Posterior cingulate gyrus (tissue), 11 donors: ENCODE measurements at regions of chr20 and their contacts with region 1.

Region 1: GRCh38 chr20:2172305-2173175 is 70.9 kb downstream of the STK35 start:
- DNase-seq: peak; percentile 65 to 97 (median 82)

Region 2: DNA sequence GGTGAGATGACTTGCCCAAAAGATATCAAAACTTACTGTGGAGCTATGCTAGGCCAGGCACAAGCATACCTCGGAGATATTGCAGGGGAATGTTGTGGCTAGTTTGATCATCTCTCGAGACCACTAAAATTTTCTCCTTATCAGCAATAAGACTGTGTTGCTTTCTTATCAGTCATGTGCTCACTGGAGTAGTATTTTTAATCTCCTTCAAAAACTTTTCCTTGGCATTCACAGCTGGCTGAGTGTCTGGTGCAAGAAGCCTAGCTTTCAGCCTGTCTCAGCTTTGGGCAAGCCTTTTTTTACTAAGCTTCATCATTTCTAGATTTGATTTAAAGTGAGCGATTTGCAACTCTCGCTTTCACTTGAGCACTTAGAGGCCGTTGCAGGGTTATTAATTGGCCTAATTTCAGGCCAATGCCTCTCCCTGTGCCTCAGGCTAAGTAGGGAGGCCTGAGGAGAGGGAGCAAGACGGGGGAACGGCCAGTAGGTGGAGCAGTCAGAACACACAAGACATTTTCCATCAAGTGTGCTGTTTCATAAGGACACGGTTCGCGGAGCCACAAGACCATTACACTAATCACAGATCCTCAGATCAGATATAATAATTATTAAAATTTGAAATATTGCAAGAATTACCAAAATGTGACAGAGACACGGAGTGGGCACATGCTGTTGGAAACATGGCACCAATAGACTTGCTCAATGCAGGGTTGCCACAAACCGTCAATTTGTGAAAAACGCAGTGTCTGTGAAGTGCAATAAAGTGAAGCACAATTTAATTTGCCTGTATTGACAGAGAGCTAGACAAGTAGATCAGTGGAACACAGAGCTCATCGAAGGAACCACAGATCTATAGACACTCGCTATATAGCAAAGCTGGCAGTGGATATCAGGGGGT is 408.2 kb before region 1 on chr20:
- intact Hi-C with region 1: loop called (anchors 2 kb)
- DNase-seq: peak; percentile 61 to 96 (median 80)

Region 3: DNA sequence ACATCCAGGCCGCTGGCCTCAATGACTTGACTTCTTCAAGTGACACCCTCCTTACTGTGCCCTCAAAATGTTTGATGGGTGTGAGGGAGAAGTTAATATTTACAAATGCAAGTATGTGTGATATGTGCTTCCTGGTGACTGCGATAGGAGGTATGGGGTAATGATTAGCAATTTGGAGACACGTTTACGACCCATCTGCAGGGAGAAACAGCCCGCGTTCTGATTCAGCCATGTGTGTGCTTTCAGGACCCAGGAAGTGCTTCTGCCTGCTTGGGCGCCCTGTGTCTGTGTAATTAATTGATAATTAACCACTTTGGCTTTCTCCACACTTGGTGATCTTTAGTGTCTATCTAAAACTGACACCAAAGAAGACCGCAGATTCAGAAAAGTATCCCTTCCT is 252.3 kb before region 1 on chr20:
- intact Hi-C with region 1: no loop called
- DNase-seq: peak in 2 of 10 donors; percentile 31 to 67

Region 4: GRCh38 chr20:1965520-1966351 is 206.8 kb before region 1 on chr20:
- intact Hi-C with region 1: loop called (anchors 1 kb)
- DNase-seq: peak; percentile 59 to 97 (median 83)

Region 5: GRCh38 chr20:2005831-2006426 is 166.6 kb before region 1 on chr20:
- intact Hi-C with region 1: loop called (anchors 2 kb)
- DNase-seq: peak in 9 of 10 donors; percentile 28 to 92 (median 68)

Region 6: DNA sequence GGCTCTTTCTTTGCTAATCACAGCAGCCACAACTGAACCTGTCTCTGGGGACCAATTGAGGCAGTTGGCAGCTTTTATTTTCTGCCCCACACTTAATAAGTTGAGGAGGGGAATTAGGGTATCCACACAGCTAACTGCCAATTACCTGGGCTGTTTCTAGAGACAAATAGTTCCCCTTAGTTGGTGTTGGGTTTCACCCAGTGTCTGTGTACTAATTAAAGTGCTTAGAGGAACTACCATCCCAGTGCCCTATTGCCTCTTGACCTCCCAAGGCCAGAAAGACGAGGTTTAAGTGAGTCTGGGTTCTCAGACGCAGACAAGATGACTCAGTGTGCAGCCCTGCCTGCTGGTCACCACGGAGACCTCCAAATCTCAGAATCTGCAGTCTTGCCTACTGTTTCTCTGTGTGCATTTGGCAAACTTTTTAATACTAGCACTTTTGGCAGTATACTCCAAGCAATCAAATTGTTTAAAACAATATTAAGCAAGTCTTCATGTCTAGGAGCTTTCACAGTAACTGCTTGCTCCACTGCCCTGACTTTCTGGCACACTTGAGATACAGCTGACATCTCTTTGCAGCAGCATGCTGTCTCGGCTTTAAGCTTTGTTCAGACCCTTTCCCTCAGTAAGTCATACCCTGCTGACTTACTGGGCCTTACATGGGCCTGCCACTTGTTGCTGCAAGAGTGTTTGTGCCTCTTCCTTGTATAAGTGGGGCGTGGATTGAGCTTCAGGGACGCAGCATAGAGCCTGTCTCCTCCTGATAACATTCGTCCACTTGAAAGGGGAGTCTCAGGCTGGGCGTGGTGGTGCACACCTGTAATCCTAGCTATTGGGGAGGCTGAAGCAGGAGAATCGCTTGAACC is 39.0 kb before region 1 on chr20:
- intact Hi-C with region 1: no loop called
- DNase-seq: no peak

Region 7: GRCh38 chr20:2217857-2218539 is 45.5 kb after region 1 on chr20:
- intact Hi-C with region 1: no loop called
- DNase-seq: no peak

Region 8: DNA sequence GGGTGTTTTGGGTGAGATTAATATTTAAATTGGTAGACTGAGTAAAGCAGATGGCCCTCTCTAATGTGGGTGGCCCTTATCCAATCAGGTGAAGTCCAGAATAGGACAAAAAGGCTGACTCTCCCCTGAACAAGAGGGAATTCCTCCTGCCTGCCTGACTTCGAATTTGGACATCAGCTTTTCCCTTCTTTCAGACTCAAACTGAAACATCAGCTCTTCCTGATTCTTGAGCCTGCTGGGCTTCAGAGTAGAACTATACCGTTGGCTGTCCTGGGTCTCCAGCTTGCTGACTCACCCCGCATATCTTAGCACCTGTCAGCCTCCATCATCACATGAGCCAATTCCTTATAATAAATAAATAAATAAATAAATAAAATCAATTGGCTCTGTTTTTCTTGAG is 193.1 kb after region 1 on chr20:
- intact Hi-C with region 1: no loop called
- DNase-seq: no peak